Psoas muscle (tissue), 8 donors: ENCODE measurements at regions of chr11 and their contacts with region 1.

Region 1: GRCh38 chr11:111230122-111230465 is 15.4 kb upstream of the POU2AF2 start:
- DNase-seq: no peak
- ATAC-seq: peak; percentile 35 to 66 (median 47)
- H3K4me3 ChIP-seq: peak overlapping the region; percentile 74
- H3K27ac ChIP-seq: no peak overlapping the region
- H3K4me1 ChIP-seq: no peaks in the 10 kb centered on the region
- H3K27me3 ChIP-seq: no peaks in the 10 kb centered on the region
- CTCF ChIP-seq: no peak

Region 2: GRCh38 chr11:110195845-110196754 is 1034.0 kb before region 1 on chr11:
- intact Hi-C with region 1: loop called (anchors 10 kb)
- DNase-seq: no peak
- ATAC-seq: no peak
- H3K4me3 ChIP-seq: no peak overlapping the region
- H3K27ac ChIP-seq: no peak overlapping the region
- H3K4me1 ChIP-seq: no peaks in the 10 kb centered on the region
- H3K27me3 ChIP-seq: no peaks in the 10 kb centered on the region
- CTCF ChIP-seq: no peak

Region 3: DNA sequence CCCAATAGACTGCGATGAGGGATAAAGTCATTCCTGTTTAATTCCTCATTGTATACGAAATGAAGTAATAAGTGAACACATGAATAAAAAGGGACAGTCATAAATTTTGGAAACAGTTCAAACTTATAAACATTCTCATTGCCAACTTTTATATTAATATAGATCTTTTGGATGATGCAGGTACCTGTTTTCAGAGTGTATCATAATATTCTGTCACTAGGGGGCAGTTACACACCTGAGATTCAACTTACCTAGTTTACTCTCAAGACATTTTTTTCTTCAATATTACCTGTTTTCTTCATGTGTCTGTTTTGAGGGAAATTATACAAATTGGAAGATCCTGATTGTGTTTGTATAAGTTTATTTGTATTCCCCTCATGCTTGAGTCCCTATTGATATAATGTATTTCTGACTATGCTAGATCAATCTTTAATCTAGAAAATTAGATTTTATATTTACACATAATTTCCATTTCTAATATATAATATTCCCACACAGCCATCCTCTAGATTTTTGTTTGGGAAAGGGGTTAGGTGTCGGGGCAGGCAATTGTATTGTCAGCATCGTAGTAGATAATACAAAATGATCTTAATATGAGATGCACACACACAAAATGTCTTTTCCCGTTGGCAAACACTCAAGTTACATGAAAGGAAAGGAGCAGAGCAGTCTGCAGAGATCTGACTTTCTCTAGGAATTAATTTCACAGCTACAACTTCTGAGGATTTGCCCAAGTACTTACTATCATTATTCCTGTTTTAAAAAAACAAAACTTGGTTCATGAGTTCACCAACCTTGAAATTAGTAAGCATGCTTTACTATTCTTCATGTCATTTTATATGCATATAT is 782.0 kb before region 1 on chr11:
- intact Hi-C with region 1: loop called in 1 of 2 experiments (anchors 5 kb)
- DNase-seq: no peak
- ATAC-seq: no peak
- H3K4me3 ChIP-seq: no peak overlapping the region
- H3K27ac ChIP-seq: no peak overlapping the region
- H3K4me1 ChIP-seq: no peaks in the 10 kb centered on the region
- H3K27me3 ChIP-seq: no peaks in the 10 kb centered on the region
- CTCF ChIP-seq: peak; percentile 44

Region 4: DNA sequence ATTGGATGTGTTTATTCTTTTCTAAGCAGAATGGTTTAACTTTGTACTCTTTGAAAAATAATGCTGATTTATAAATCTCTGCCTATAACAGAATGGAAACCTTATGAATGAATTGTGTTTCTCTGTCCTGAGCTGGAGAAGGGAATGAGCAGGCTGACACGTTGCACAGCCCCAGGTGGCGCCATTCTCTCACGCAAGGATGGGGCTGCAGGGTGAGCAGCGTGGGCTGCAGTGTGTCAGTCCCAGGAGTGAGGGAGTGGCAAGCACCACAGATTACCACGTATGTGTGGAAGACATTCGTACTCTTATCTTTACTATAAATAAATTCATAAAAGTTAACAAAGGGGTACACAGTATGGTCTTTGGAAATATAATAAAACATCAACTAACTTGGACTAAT is 766.9 kb before region 1 on chr11:
- intact Hi-C with region 1: loop called in 1 of 2 experiments (anchors 5 kb)
- DNase-seq: peak; percentile 51 to 75
- ATAC-seq: peak; percentile 69 to 76 (median 71)
- H3K4me3 ChIP-seq: no peak overlapping the region
- H3K27ac ChIP-seq: no peak overlapping the region
- H3K4me1 ChIP-seq: no peaks in the 10 kb centered on the region
- H3K27me3 ChIP-seq: no peaks in the 10 kb centered on the region
- CTCF ChIP-seq: peak; percentile 46

Region 5: GRCh38 chr11:110711776-110712658 is 518.1 kb before region 1 on chr11 and contains the start of gene ARHGAP20:
- intact Hi-C with region 1: loop called in 1 of 2 experiments (anchors 5 kb)
- DNase-seq: peak; percentile 77 to 83
- ATAC-seq: peak; percentile 86 to 89 (median 88)
- H3K4me3 ChIP-seq: peak within 1 kb of the TSS; percentile 85
- H3K27ac ChIP-seq: peak within 1 kb of the TSS; percentile 75
- H3K4me1 ChIP-seq: peaks cover 6% of the 10 kb centered on the region
- H3K27me3 ChIP-seq: no peaks in the 10 kb centered on the region
- CTCF ChIP-seq: no peak
- total RNA-seq, gene ARHGAP20: 0.67 to 5.9 (median 1.0) TPM

Region 6: GRCh38 chr11:111250936-111251335 is 20.8 kb after region 1 on chr11:
- intact Hi-C with region 1: no loop called
- DNase-seq: no peak
- ATAC-seq: no peak
- H3K4me3 ChIP-seq: no peak overlapping the region
- H3K27ac ChIP-seq: no peak overlapping the region
- H3K4me1 ChIP-seq: no peaks in the 10 kb centered on the region
- H3K27me3 ChIP-seq: peaks cover 1 to 5% (median 3%) of the 10 kb centered on the region in 3 donors
- CTCF ChIP-seq: no peak

Region 7: DNA sequence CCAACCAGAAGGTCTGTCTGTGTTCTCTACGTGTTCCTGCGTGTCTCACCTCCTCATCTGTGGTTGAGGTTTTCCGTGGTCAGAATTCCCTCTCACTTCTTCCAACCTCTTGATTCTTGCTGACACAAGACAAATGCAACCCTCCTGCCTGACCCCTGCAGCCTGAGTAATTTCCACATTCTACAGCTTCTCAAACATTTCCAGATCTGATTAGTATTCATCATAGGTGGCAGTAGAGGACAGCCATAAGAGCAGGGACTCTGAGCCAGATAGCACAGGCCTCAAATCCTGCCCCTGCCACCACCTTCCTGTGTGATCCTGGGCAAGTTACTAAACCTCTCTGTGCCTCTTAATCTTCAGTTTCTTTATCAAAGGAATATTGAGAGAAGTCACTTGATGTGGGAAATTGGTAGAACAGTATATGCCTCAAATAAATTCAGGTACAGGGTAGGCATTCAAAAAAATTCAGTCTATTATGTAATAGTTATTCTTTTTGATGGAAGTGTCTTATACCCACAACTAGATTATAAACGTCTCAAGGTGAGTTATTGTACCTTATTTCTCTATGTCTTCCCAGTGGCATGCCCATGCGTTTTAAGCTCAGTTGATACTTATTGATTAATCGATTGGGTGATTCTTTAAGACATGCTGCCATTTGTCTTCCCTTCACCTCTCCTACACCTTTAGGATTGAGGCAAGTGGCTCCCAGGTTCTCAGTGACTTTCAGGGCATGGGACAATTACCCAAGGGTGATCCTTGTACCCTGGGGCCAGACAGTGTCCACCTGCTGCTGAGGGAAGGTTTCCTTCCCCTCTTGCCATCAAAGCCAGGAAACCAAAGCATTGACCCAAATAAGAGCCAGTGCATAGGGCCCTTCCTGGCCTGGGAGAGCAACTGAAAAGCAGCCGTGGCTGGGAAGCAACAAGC is 129.4 kb after region 1 on chr11:
- intact Hi-C with region 1: no loop called
- DNase-seq: no peak
- ATAC-seq: no peak
- H3K4me3 ChIP-seq: no peak overlapping the region
- H3K27ac ChIP-seq: no peak overlapping the region
- H3K4me1 ChIP-seq: no peaks in the 10 kb centered on the region
- H3K27me3 ChIP-seq: no peaks in the 10 kb centered on the region
- CTCF ChIP-seq: no peak

Region 8: DNA sequence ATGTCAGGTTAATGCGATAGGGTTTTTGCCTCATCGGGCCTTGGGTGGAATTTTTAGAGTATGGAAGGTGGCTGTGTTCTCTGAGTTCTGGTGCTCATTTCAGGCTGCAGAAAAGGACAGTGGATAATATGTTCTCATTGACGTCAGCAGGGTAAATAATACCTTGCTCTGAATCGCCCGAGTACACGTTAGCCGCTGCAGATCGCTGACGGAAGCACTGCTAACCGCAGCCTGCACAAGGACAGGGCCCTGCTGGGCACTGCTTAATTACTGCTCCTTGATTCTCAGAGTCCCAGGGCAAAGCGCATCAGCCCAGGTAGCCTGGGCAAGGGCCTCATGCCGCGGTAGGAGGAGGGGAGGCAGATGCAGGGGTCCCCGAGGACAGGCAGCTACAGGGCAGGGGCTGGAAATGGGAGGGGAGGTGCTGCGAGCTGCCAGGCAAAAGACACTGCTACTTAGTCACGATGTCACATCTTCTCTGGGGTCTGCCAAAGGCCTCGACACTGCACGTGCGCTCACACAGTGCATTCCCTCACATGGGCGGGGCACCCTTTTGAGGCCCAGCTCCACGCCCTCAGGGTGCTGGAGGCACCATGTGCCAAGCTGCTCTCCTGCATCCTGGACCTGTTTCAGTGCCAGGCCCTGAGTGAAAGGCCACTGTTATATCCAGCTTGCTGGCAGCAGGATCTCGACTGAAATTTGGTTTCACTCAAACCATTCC is 500.9 kb after region 1 on chr11:
- intact Hi-C with region 1: no loop called
- DNase-seq: peak; percentile 74 to 91
- ATAC-seq: peak; percentile 78 to 83 (median 80)
- H3K4me3 ChIP-seq: peak overlapping the region; percentile 29
- H3K27ac ChIP-seq: peak overlapping the region; percentile 91
- H3K4me1 ChIP-seq: peaks cover 66% of the 10 kb centered on the region
- H3K27me3 ChIP-seq: no peaks in the 10 kb centered on the region
- CTCF ChIP-seq: no peak

Region 9: GRCh38 chr11:112226062-112226830 is 996.2 kb after region 1 on chr11 and contains the start of gene PTS:
- intact Hi-C with region 1: no loop called
- DNase-seq: peak; percentile 89 to 94
- ATAC-seq: peak; percentile 96 to 99 (median 98)
- H3K4me3 ChIP-seq: peak within 1 kb of the TSS; percentile 72
- H3K27ac ChIP-seq: peak within 1 kb of the TSS; percentile 99
- H3K4me1 ChIP-seq: peaks cover 14% of the 10 kb centered on the region
- H3K27me3 ChIP-seq: no peaks in the 10 kb centered on the region
- CTCF ChIP-seq: no peak
- total RNA-seq, gene PTS: 26.5 to 47.8 (median 43.7) TPM